Calu3 (cell line): ENCODE measurements at regions of chr12 and their contacts with region 1.

Region 1: DNA sequence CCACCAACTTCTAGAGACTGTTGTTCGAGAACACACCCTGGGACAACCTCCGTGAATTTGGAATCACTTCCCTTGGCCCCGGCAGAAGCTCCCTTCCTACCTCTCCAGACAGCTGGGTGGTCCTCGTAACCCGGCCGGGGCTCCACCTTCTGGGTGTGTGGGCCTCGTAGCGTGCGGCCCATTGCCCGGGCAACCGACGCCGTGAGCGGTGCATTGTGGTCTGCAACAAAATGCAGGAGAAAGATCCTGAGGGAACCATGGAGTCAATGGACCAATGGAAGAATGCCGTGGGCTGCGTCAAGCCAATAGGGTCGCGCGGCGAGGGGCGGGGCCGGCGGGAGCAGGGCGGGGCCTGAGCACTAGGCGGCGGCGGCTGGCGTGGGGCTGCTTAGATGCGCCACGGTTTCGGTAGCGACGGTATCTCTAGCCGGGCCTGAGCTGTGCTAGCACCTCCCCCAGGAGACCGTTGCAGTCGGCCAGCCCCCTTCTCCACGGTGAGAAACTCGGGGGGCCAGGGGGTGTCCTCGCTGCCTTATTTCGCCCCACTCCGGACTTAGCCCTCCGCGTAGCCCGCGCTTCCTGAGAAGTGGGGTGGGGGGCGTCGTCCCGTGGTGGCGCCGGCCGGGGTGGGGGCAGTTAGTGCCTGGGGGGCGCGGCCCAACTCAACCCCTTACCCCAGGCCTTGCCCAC is at the start of gene DYNLL1:
- DNase-seq: peak; percentile 99
- H3K4me3 Mint-ChIP-seq: peak within 1 kb of the TSS; percentile 93
- H3K27ac Mint-ChIP-seq: peak within 1 kb of the TSS; percentile 92
- H3K4me1 Mint-ChIP-seq: peaks cover 25% of the 10 kb centered on the region
- H3K27me3 Mint-ChIP-seq: no peaks in the 10 kb centered on the region
- CTCF ChIP-seq: no peak
- total RNA-seq, gene DYNLL1: 419 and 423 TPM in 2 replicates

Region 2: GRCh38 chr12:120116792-120117651 is 378.8 kb before region 1 on chr12:
- CTCF ChIA-PET with region 1: no interaction called
- intact Hi-C with region 1: no loop called
- DNase-seq: peak; percentile 99
- H3K4me3 Mint-ChIP-seq: peak overlapping the region; percentile 98
- H3K27ac Mint-ChIP-seq: peak overlapping the region; percentile 95
- H3K4me1 Mint-ChIP-seq: peaks cover 51% of the 10 kb centered on the region
- H3K27me3 Mint-ChIP-seq: no peaks in the 10 kb centered on the region
- CTCF ChIP-seq: no peak

Region 3: GRCh38 chr12:120437754-120438494 is 57.9 kb before region 1 on chr12 and contains the start of gene COX6A1:
- CTCF ChIA-PET with region 1: interaction called, 3 read pairs
- intact Hi-C with region 1: loop called (anchors 1 kb)
- DNase-seq: peak; percentile 98
- H3K4me3 Mint-ChIP-seq: peak within 1 kb of the TSS; percentile 82
- H3K27ac Mint-ChIP-seq: peak within 1 kb of the TSS; percentile 46
- H3K4me1 Mint-ChIP-seq: no peaks in the 10 kb centered on the region
- H3K27me3 Mint-ChIP-seq: no peaks in the 10 kb centered on the region
- CTCF ChIP-seq: no peak
- total RNA-seq, gene COX6A1: 482 and 487 TPM in 2 replicates

Region 4: DNA sequence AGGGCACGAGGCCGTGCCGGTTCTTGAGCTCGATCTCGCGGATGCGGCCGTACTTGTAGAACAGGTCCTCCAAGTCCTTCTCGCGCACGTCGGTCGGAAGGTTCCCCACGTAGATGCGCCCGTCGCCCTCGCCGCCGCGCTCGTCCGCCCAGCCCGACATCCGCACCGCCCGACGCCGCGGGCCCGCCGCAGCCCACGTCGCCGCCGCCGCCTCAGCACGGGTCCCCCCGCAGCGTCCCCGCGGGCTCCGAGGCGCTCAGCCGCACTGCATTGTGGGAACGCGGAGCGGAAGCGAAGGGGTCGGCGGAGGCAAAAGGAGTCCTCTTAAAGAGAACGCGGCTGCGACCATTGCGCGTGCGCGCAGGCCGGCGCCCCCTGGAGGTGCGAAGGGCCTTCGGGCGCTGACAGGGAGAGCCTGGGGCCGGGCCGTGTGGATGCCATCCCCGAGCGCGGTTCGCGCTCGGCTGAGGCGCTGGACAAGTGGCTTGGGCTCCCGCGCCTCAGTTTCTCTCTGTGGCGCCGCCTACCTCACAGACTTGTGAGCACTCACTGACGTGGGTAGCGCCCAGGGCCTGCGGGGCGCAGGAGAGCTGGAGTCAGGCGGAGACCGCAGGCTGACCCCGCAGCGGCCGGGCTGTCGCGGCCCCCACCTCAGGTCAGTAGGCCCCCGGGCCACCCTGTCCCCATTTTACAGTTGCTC is 26.3 kb before region 1 on chr12 and contains the start of gene SRSF9:
- CTCF ChIA-PET with region 1: interaction called, 22 read pairs
- intact Hi-C with region 1: no loop called
- DNase-seq: peak; percentile 98
- H3K4me3 Mint-ChIP-seq: peak within 1 kb of the TSS; percentile 95
- H3K27ac Mint-ChIP-seq: peak within 1 kb of the TSS; percentile 62
- H3K4me1 Mint-ChIP-seq: peaks cover 49% of the 10 kb centered on the region
- H3K27me3 Mint-ChIP-seq: no peaks in the 10 kb centered on the region
- CTCF ChIP-seq: peak; percentile 93
- total RNA-seq, gene SRSF9: 284 and 292 TPM in 2 replicates

Region 5: DNA sequence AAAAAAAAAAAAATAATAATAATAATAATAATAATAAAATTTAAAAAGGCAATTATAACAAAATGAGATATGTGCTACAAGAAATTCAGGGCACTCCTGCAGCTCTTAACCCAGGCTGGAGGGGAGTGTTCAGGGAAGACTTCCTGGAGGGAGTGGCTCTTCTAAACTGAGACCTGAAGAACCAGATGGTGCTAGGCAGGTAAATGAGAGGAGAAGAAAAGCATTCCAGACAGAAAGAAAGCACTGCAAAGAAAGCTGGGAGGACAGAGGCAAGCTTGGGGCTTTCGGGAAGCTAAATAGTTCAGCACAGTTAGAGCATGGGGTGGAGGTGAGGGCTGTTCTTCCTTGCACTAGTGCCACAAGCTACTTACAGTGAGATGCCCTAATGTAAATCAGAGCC is 16.4 kb before region 1 on chr12:
- CTCF ChIA-PET with region 1: interaction called, 22 read pairs
- intact Hi-C with region 1: loop called (anchors 2 kb)
- DNase-seq: peak; percentile 19
- H3K4me3 Mint-ChIP-seq: no peak overlapping the region
- H3K27ac Mint-ChIP-seq: no peak overlapping the region
- H3K4me1 Mint-ChIP-seq: peaks cover 19% of the 10 kb centered on the region
- H3K27me3 Mint-ChIP-seq: no peaks in the 10 kb centered on the region
- CTCF ChIP-seq: no peak

Region 6: GRCh38 chr12:120534703-120535655 is 39.1 kb after region 1 on chr12:
- CTCF ChIA-PET with region 1: no interaction called
- intact Hi-C with region 1: loop called (anchors 5 kb)
- DNase-seq: peak; percentile 67
- H3K4me3 Mint-ChIP-seq: peak overlapping the region; percentile 98
- H3K27ac Mint-ChIP-seq: peak overlapping the region; percentile 96
- H3K4me1 Mint-ChIP-seq: peaks cover 21% of the 10 kb centered on the region
- H3K27me3 Mint-ChIP-seq: no peaks in the 10 kb centered on the region
- CTCF ChIP-seq: no peak